ENCODE measurements at regions of chr2 and their contacts with region 1.

Region 1: DNA sequence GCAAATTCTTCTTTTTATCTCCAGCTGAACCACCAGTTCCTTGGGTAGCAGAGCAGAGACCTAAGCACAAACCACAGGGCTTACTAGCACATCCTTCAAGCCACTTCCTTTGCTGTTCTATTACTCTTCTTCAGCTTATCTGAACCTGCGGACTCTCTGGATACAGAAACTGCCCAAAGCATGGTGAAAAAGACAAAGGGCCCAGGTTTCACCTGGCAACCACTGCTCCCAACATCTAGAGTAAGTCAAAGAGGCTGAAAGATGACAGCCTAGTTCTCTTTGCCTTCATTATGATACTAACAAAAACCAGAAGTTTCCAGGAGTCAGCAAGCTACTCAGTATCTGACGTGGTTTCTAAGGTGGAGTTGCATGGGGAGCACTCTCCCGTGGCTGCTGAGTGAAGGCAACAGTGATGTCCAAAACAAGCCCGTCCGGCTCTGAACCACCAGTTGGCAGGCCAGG is 43.4 kb downstream of the KANSL3 start:
- DNase-seq: peak in 7 of 9 donors; percentile 19 to 52 (median 41)
- ATAC-seq: peak; percentile 84
- H3K4me3 ChIP-seq: no peak overlapping the region
- H3K4me3 Mint-ChIP-seq: peak overlapping the region in 9 of 10 donors; percentile 2 to 80 (median 48)
- H3K27ac ChIP-seq: peak overlapping the region; percentile 19
- H3K27ac Mint-ChIP-seq: peak overlapping the region; percentile 58 to 92 (median 78)
- H3K4me1 ChIP-seq: peaks cover 20 to 32% of the 10 kb centered on the region in 2 donors
- H3K4me1 Mint-ChIP-seq: peaks cover 22 to 63% (median 31%) of the 10 kb centered on the region in 7 donors
- H3K27me3 ChIP-seq: no peaks in the 10 kb centered on the region
- H3K27me3 Mint-ChIP-seq: no peaks in the 10 kb centered on the region

Region 2: GRCh38 chr2:96437512-96437911 is 157.2 kb before region 1 on chr2:
- CTCF ChIA-PET with region 1: no interaction called
- POLR2A ChIA-PET with region 1: no interaction called
- intact Hi-C with region 1: no loop called
- DNase-seq: no peak
- ATAC-seq: peak; percentile 20
- H3K4me3 ChIP-seq: no peak overlapping the region
- H3K4me3 Mint-ChIP-seq: no peak overlapping the region
- H3K27ac ChIP-seq: no peak overlapping the region
- H3K27ac Mint-ChIP-seq: no peak overlapping the region
- H3K4me1 ChIP-seq: no peaks in the 10 kb centered on the region
- H3K4me1 Mint-ChIP-seq: no peaks in the 10 kb centered on the region
- H3K27me3 ChIP-seq: peaks cover 0 to 3% of the 10 kb centered on the region in 2 donors
- H3K27me3 Mint-ChIP-seq: peaks cover 5 to 14% (median 9%) of the 10 kb centered on the region in 5 donors

Region 3: GRCh38 chr2:96580771-96581170 is 14.0 kb before region 1 on chr2:
- CTCF ChIA-PET with region 1: interaction called, 3 read pairs
- POLR2A ChIA-PET with region 1: interaction called, 3 read pairs
- intact Hi-C with region 1: loop called in 1 of 2 experiments (anchors 2 kb)
- DNase-seq: no peak
- ATAC-seq: no peak
- H3K4me3 ChIP-seq: no peak overlapping the region
- H3K4me3 Mint-ChIP-seq: no peak overlapping the region
- H3K27ac ChIP-seq: no peak overlapping the region
- H3K27ac Mint-ChIP-seq: no peak overlapping the region
- H3K4me1 ChIP-seq: no peaks in the 10 kb centered on the region
- H3K4me1 Mint-ChIP-seq: peaks cover 0 to 2% (median 0%) of the 10 kb centered on the region in 7 donors
- H3K27me3 ChIP-seq: no peaks in the 10 kb centered on the region
- H3K27me3 Mint-ChIP-seq: peaks cover 0 to 4% (median 0%) of the 10 kb centered on the region in 5 donors

Region 4: DNA sequence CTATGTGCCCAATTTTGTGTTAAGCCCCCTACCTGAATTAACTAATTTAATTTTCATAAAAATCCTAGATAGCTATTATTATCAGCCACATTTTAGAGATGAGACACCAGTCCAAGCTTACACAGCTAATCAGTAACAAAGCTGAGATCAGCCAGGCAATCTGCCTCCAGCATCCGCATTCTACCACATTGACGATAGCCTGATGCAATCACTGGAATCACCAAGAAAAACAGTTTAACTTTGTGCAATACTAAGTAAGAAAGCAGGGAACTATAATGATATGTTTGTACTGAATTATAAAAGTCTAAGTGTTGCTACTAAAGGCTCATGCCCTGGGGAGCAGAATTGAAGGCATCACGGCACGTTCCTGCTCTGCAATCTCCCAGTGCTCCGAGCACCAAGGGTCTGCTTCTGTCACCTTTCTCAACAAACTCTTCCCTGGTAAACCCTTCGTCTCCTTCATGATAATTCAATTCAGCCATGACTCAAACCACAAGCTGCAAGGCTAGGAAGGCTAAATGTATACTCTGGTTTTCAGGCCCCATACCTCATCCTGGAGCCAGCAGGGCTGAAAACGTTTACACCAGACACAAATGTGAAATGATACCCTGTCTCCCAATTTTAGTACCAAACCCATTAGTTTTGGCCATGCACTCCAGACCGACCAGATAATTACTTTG is 24.0 kb after region 1 on chr2:
- CTCF ChIA-PET with region 1: no interaction called
- POLR2A ChIA-PET with region 1: no interaction called
- intact Hi-C with region 1: loop called in 1 of 2 experiments (anchors 1 kb)
- DNase-seq: no peak
- ATAC-seq: peak; percentile 57
- H3K4me3 ChIP-seq: no peak overlapping the region
- H3K4me3 Mint-ChIP-seq: no peak overlapping the region
- H3K27ac ChIP-seq: no peak overlapping the region
- H3K27ac Mint-ChIP-seq: peak overlapping the region in 2 of 9 donors; percentile 3 to 63
- H3K4me1 ChIP-seq: peaks cover 0 to 6% of the 10 kb centered on the region in 2 donors
- H3K4me1 Mint-ChIP-seq: peaks cover 18 to 43% (median 30%) of the 10 kb centered on the region in 7 donors
- H3K27me3 ChIP-seq: no peaks in the 10 kb centered on the region
- H3K27me3 Mint-ChIP-seq: no peaks in the 10 kb centered on the region

Region 5: DNA sequence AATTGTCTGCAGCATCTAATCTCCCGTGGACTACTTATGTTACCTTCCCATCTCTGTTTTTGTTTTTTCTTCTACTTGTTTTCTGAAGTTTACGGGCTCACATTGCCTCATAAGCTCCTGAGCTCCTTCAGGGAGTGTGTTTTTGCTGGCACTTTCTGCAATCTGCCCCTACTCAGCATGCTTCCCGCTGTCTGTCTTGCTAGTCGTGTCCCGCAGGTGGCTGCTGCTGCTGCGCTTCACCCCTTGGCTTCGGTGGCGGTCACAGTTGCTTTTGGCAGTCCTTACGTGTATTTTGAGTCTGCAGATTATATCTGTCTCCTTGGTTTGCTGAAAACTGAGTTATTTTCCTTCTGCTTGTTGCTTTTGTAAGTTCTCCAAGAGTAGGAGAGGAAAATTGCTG is 85.1 kb after region 1 on chr2:
- CTCF ChIA-PET with region 1: no interaction called
- POLR2A ChIA-PET with region 1: no interaction called
- intact Hi-C with region 1: no loop called
- DNase-seq: no peak
- ATAC-seq: no peak
- H3K4me3 ChIP-seq: no peak overlapping the region
- H3K4me3 Mint-ChIP-seq: no peak overlapping the region
- H3K27ac ChIP-seq: no peak overlapping the region
- H3K27ac Mint-ChIP-seq: no peak overlapping the region
- H3K4me1 ChIP-seq: no peaks in the 10 kb centered on the region
- H3K4me1 Mint-ChIP-seq: peaks cover 0 to 2% (median 0%) of the 10 kb centered on the region in 7 donors
- H3K27me3 ChIP-seq: peaks cover 0 to 4% of the 10 kb centered on the region in 2 donors
- H3K27me3 Mint-ChIP-seq: peaks cover 4 to 16% (median 5%) of the 10 kb centered on the region in 5 donors

Region 6: DNA sequence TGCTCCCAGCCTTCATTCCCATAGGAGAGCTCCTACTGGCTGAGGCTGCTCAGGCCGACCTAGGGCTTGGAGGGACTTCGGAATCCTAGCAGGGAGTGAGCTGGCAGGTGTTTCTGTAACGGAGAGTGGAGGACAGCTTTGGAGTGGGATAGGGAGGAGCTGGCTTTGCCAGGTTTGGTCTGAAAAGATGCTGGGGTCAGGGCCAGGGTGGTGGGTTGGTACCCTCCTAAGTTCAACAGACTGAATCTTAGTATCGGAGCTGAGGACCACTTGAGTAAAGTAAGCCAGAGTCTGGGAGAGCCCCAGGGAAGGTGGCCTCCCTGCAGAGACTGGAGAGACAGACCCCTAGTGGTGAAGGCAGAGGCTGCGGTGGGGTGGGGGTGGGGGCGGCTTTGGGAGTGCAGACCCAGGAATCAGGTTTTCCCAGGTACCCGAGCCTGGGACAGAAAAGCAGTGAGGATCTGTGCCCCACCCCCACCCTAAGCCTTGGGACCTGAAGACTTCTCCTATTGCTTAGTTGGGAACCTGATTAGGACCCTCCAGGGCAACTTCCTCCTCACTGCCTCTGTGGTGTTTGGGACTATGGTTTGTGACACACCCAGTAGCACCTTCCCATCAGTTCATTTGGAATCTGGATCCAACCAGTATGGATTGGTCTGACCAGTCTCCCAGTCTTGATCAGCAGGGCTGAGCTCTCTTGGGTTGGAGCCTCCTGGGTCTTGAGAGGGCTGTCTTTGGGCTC is 169.0 kb after region 1 on chr2:
- CTCF ChIA-PET with region 1: no interaction called
- POLR2A ChIA-PET with region 1: no interaction called
- intact Hi-C with region 1: no loop called
- DNase-seq: peak in 2 of 9 donors; percentile 14
- ATAC-seq: no peak
- H3K4me3 ChIP-seq: peak overlapping the region; percentile 83
- H3K4me3 Mint-ChIP-seq: peak overlapping the region; percentile 70 to 96 (median 84)
- H3K27ac ChIP-seq: no peak overlapping the region
- H3K27ac Mint-ChIP-seq: peak overlapping the region in 4 of 9 donors; percentile 26 to 78 (median 70)
- H3K4me1 ChIP-seq: peaks cover 46 to 53% of the 10 kb centered on the region in 2 donors
- H3K4me1 Mint-ChIP-seq: peaks cover 55 to 76% (median 66%) of the 10 kb centered on the region in 7 donors
- H3K27me3 ChIP-seq: no peaks in the 10 kb centered on the region
- H3K27me3 Mint-ChIP-seq: no peaks in the 10 kb centered on the region